PC-9 (cell line): ENCODE measurements at regions of chr15 and their contacts with region 1.

Region 1: GRCh38 chr15:90986807-90987507 is 7.4 kb downstream of the PRC1 start:
- DNase-seq: no peak
- H3K4me3 ChIP-seq: no peak overlapping the region
- H3K27ac ChIP-seq: no peak overlapping the region
- H3K4me1 ChIP-seq: no peaks in the 10 kb centered on the region
- H3K27me3 ChIP-seq: no peaks in the 10 kb centered on the region
- CTCF ChIP-seq: no peak

Region 2: GRCh38 chr15:91022075-91022835 is 35.3 kb after region 1 on chr15 and contains the start of gene VPS33B:
- CTCF ChIA-PET with region 1: no interaction called
- POLR2A ChIA-PET with region 1: interaction called, 16 read pairs
- intact Hi-C with region 1: no loop called
- DNase-seq: peak; percentile 71 to 78
- H3K4me3 ChIP-seq: peak within 1 kb of the TSS; percentile 90
- H3K27ac ChIP-seq: no peak within 1 kb of the TSS
- H3K4me1 ChIP-seq: peaks cover 21% of the 10 kb centered on the region
- H3K27me3 ChIP-seq: no peaks in the 10 kb centered on the region
- CTCF ChIP-seq: no peak
- total RNA-seq, gene VPS33B: 12.1 and 13.6 TPM in 2 replicates